BJ (cell line): ENCODE measurements at regions of chr7 and their contacts with region 1.

Region 1: DNA sequence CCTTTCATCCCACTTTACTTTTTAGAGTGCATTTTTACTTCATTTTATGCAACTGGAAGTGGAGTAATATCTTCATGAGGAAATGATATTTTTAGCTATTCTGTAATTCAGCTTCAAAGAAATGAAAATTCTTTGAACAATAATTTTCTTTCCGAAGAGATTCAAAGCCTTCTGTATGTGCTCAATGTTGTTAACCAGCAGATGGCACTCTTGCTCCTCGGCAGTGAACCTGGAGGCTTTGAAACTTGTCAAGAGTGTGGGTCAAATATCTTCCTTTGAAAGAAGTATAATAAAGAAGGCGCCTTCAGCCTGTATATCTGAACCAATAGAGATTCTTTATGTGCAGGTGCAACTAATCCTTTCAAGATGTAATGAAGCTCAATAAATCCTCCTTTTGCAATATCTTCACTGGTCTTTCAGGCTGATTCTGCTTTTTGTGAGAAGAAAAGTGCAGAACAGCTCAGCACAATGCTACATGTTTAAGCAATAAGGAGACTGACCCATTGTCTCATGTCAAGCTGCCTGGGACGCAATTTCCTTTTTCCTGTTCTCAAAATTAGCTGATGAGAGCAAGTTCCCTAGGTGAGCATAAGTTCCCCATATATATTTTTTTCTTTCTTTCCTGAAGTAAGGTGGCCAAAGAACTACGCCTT is 258.4 kb downstream of the SEMA3A start:
- DNase-seq: peak; percentile 17
- H3K4me3 ChIP-seq: no peak overlapping the region
- H3K27me3 ChIP-seq: no peaks in the 10 kb centered on the region
- CTCF ChIP-seq: peak; percentile 91

Region 2: DNA sequence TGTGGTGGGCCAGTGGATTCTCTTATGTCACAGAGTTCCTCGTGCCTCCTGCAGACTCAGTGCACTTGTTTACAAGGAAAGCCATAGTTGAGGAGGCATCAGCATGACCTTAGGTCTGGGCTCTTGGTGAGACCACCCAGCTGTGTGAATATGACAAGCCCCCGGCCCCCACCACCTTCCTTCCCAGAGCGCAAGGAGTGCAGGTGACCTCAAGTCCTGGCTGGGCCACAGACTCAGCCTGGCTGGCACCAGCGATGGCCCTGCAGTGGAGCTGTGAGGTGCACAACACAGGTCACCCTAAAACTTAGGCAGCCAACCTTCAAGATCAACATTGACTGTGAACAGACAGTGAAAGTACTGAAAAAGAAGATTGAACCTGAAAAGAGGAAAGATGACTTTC is 273.1 kb before region 1 on chr7:
- CTCF ChIA-PET with region 1: no interaction called
- POLR2A ChIA-PET with region 1: no interaction called
- DNase-seq: no peak
- H3K4me3 ChIP-seq: no peak overlapping the region
- H3K27me3 ChIP-seq: no peaks in the 10 kb centered on the region; the same call in 1 of the 2 replicates
- CTCF ChIP-seq: no peak

Region 3: GRCh38 chr7:83947260-83947659 is 11.1 kb after region 1 on chr7:
- CTCF ChIA-PET with region 1: interaction called, 53 read pairs
- POLR2A ChIA-PET with region 1: no interaction called
- DNase-seq: no peak
- H3K4me3 ChIP-seq: no peak overlapping the region
- H3K27me3 ChIP-seq: no peaks in the 10 kb centered on the region
- CTCF ChIP-seq: peak; percentile 33; the same call in 1 of the 2 replicates

Region 4: DNA sequence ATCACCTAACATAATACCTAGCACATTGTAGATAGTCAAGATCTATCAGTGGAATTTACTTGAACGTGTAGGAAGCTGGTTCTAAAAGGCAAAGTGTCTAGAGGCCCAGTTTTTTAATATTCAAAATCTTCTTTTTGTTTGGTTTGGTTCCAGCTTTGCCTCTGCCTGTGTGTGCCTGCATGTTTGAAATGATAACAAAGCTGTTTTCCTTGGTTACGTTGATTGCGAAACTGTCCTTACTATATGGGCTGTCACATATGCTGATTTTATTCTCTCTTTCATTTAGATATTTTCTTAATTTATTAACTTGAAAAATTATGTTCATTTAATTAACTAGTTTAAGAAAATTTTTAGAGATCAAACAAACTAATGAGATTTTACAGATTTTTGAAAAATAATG is 21.2 kb after region 1 on chr7:
- CTCF ChIA-PET with region 1: interaction called, 24 read pairs
- POLR2A ChIA-PET with region 1: no interaction called
- DNase-seq: no peak
- H3K4me3 ChIP-seq: no peak overlapping the region
- H3K27me3 ChIP-seq: no peaks in the 10 kb centered on the region
- CTCF ChIP-seq: no peak

Region 5: DNA sequence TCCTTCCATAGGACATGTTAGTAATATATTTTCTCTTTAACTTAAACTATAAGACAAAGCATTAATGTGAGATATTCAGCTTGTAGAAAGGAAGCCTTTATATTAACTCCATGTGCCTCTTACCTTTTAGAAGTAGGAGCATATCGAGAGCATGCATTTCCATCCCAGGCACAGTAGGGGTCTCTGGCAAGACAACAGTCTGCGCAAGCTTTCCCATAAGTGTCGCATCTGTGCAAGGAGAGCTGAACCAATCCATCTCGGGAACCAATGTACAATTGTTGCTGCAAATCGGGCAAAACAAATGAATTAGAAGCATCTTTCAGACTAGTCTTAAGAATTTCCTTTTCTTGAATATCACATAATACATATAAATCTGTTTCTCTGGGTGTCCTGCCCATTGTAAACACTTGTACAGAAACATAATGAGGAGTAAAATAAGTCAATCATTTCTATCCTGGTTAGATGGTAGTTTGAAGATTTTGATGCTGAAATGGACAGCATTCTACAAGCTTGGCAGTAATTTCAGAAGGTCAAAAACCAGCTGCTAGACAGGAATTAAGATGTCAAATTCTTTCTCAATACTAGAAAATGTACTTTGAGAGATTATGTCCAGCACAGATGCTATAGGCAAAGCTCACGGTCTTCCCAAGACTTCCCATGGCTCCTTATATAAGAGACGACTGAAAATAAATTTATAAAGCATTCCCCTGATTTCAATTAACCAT is 1078.9 kb after region 1 on chr7:
- CTCF ChIA-PET with region 1: interaction called, 205 read pairs
- POLR2A ChIA-PET with region 1: no interaction called
- DNase-seq: no peak
- H3K4me3 ChIP-seq: no peak overlapping the region
- H3K27me3 ChIP-seq: no peaks in the 10 kb centered on the region
- CTCF ChIP-seq: no peak

Region 6: GRCh38 chr7:85030893-85031292 is 1094.7 kb after region 1 on chr7:
- CTCF ChIA-PET with region 1: interaction called, 205 read pairs
- POLR2A ChIA-PET with region 1: no interaction called
- DNase-seq: no peak
- H3K4me3 ChIP-seq: no peak overlapping the region
- H3K27me3 ChIP-seq: no peaks in the 10 kb centered on the region
- CTCF ChIP-seq: peak; percentile 49